Right cardiac atrium (tissue), 5 donors: ENCODE measurements at regions of chr3 and their contacts with region 1.

Region 1: GRCh38 chr3:148379763-148380382 is 317.8 kb upstream of the AGTR1 start:
- DNase-seq: no peak
- ATAC-seq: peak; percentile 69 to 83
- H3K4me3 ChIP-seq: no peak overlapping the region
- H3K27ac ChIP-seq: no peak overlapping the region
- H3K4me1 ChIP-seq: no peaks in the 10 kb centered on the region
- H3K27me3 ChIP-seq: no peaks in the 10 kb centered on the region

Region 2: DNA sequence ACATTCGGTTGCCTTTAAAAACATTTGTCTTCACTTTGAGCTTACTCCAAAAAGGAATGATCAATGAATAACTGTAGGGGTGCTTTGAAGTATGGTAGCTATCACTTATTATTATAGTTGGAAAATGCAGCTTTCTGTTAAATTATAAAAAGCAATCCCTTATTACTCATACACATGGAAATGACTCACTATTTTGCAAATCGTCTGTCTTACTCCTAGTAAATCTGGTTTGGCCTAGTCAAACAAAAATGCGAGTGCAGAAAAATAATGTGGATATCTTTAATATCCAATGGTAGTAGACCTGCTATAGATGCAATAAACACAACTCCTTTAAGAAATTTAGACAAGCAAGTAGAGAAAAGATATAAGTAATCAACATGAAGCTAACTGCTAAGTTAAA is 858.2 kb before region 1 on chr3:
- intact Hi-C with region 1: no loop called
- DNase-seq: no peak
- ATAC-seq: no peak
- H3K4me3 ChIP-seq: no peak overlapping the region
- H3K27ac ChIP-seq: no peak overlapping the region
- H3K4me1 ChIP-seq: no peaks in the 10 kb centered on the region
- H3K27me3 ChIP-seq: no peaks in the 10 kb centered on the region

Region 3: GRCh38 chr3:148718982-148719862 is 339.3 kb after region 1 on chr3:
- intact Hi-C with region 1: loop called (anchors 10 kb)
- DNase-seq: no peak
- ATAC-seq: no peak
- H3K4me3 ChIP-seq: no peak overlapping the region
- H3K27ac ChIP-seq: no peak overlapping the region
- H3K4me1 ChIP-seq: no peaks in the 10 kb centered on the region
- H3K27me3 ChIP-seq: no peaks in the 10 kb centered on the region

Region 4: GRCh38 chr3:148727247-148727646 is 347.4 kb after region 1 on chr3:
- intact Hi-C with region 1: loop called in 1 of 4 experiments (anchors 10 kb)
- DNase-seq: no peak
- ATAC-seq: peak; percentile 55 to 68
- H3K4me3 ChIP-seq: no peak overlapping the region
- H3K27ac ChIP-seq: no peak overlapping the region
- H3K4me1 ChIP-seq: no peaks in the 10 kb centered on the region
- H3K27me3 ChIP-seq: no peaks in the 10 kb centered on the region

Region 5: DNA sequence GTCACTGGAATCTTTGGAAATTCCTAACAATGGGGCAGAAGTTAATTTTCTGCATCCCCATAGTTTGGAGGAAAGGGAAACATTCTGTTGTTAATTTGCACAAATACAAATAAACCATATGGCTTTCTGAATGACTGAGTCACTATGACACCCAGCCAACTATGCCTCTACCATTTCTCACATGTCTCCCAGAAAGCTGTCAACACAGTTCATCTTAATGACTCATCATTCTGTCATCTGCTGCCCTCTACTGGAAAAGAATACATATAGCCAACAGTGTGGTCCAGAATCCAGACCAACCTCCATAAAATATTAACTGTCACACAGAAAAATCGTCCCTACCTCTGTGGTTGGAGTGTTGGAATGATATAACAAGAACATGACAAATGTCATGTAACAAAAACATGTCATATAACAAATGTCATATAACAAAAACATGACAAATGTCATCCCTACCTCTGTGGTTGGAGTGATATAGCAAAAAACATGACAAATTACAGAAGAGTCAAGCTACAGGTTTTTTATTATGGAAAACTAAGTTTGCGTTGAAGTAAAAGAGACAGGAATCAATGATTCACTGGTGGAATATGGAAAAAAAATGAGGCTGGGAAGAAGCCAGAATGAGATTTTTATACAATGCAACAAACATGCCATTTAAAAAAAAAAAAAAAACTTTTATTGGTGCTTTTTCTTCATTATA is 563.8 kb after region 1 on chr3:
- intact Hi-C with region 1: loop called in 3 of 4 experiments (anchors 10 kb)
- DNase-seq: no peak
- ATAC-seq: peak; percentile 83 to 91
- H3K4me3 ChIP-seq: no peak overlapping the region
- H3K27ac ChIP-seq: no peak overlapping the region
- H3K4me1 ChIP-seq: no peaks in the 10 kb centered on the region
- H3K27me3 ChIP-seq: no peaks in the 10 kb centered on the region